RWPE1 (cell line): ENCODE measurements at regions of chr19 and their contacts with region 1.

Region 1: GRCh38 chr19:51660975-51661600 is 14.5 kb upstream of the SIGLEC14 start:
- DNase-seq: peak; percentile 29
- H3K27ac ChIP-seq: no peak overlapping the region
- CTCF ChIP-seq: peak; percentile 33; the same call in 1 of the 2 replicates

Region 2: GRCh38 chr19:51473009-51473707 is 187.9 kb before region 1 on chr19:
- CTCF ChIA-PET with region 1: interaction called, 13 read pairs
- POLR2A ChIA-PET with region 1: no interaction called
- DNase-seq: peak; percentile 63
- H3K27ac ChIP-seq: no peak overlapping the region
- CTCF ChIP-seq: peak; percentile 90

Region 3: GRCh38 chr19:51771376-51772130 is 110.5 kb after region 1 on chr19:
- CTCF ChIA-PET with region 1: no interaction called
- POLR2A ChIA-PET with region 1: no interaction called
- DNase-seq: no peak
- H3K27ac ChIP-seq: no peak overlapping the region
- CTCF ChIP-seq: no peak